K562 (cell line): ENCODE measurements at regions of chr13 and their contacts with region 1.

Region 1: DNA sequence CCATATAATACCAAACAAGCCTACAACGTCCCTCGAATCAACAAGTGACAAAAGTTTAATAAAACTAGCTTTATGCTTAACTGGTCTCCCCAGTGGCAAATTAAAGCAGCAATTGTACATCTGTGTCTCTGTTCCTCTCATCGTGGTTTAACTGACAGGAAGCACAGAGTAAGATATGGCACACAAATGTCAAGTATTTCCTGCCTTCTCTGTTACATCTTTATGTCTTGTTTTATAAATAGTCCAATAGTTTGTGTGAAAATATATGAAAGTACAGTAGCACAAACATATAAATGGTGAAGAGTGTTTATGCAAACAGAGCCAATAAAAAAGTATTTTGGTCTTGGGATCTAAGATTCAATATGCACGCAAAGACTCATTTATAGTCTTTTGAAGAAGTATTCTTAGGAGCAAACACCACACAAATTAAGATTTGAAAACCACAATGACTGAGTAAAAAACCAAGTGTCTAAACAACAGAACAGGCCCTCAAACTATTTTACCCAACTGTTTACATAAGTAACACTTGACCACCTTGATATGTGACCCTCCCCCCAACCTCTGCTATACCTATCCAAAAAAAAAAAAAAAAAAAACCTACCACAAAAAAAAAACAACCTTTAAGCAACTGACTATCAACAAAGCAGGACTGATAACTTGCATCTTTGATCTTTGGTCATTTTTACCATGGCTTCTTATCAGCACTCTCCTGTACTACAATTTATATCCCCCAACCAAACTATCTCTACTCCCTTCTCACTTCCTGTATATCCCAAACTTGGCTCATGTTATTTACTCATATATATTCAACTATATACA is 14.0 kb downstream of the ELF1 start:
- DNase-seq: peak in 2 of 4 experiments; percentile 26 to 63
- ATAC-seq: peak; percentile 68
- H3K4me3 ChIP-seq: no peak overlapping the region
- H3K27ac ChIP-seq: peak overlapping the region; percentile 71
- H3K4me1 ChIP-seq: peaks cover 4 to 45% of the 10 kb centered on the region in 2 experiments
- H3K27me3 ChIP-seq: no peaks in the 10 kb centered on the region
- CTCF ChIP-seq: no peak
- EP300 ChIP-seq: peak; percentile 89
- POLR2A ChIP-seq: no peak
- RAD21 ChIP-seq: no peak

Region 2: DNA sequence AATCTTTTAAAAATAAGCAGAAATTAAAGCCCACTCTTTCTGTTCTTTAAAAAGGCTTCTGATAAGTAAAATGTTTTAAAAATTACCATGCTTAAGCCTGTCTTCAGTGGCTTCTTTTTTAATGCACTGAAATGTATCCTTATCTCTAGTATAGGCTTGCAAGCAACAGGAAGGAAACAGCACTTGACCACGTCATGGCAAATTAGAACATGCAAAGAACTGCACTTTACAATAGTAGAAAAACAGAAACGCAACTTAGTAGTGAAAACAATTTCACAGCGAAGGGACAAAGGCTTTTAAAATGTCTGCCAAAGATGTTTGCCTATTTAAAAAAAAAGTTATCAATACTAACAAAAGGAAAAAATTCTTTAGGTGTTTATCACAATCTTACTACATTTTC is 22.3 kb before region 1 on chr13:
- CTCF ChIA-PET with region 1: no interaction called
- POLR2A ChIA-PET with region 1: no interaction called
- in situ Hi-C with region 1: no loop called
- intact Hi-C with region 1: loop called (anchors 1 kb)
- DNase-seq: peak in 2 of 4 experiments; percentile 53 to 74
- ATAC-seq: peak; percentile 66
- H3K4me3 ChIP-seq: no peak overlapping the region
- H3K27ac ChIP-seq: peak overlapping the region; percentile 82; the same call in 2 of the 3 replicates
- H3K4me1 ChIP-seq: peaks cover 0 to 24% of the 10 kb centered on the region in 2 experiments; a peak in 1 of 5 replicates
- H3K27me3 ChIP-seq: no peaks in the 10 kb centered on the region
- CTCF ChIP-seq: no peak
- EP300 ChIP-seq: peak; percentile 68; the same call in 1 of the 2 replicates
- POLR2A ChIP-seq: no peak
- RAD21 ChIP-seq: no peak

Region 3: DNA sequence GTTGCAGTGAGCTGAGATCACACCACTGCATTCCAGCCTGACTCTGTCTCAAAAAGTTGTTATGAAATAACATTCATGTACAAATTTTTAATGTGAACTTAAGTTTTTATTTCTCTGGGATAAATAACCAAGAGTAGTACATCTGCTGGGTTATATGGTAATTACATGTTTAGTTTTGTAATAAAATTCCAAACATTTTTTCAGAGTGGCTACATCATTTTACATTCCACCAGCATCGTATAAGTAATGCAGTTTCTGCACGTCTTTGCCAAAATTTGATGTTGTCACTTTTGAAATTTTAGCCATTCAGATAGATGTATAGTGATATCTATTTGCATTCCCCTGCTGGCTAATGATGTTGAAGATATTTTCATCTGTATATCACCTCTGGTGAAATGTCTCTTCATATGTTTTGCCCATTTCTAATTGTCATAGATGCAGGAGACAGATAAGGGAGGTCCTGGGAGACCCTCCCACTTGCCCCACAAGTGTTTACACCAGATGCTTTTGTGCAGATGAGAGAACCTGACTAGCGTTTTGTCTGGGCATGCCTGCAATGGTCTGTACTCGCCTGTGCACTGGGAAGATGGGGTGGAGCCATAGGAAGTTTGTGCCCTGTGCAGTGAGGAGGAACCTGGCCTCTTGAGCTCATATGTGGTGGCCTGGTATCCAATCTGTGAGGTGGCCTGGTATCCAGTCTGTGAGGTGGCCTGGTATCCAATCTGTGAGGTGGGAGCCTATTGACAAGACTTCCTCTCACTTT is 140.2 kb after region 1 on chr13:
- CTCF ChIA-PET with region 1: no interaction called
- POLR2A ChIA-PET with region 1: no interaction called
- in situ Hi-C with region 1: no loop called
- intact Hi-C with region 1: no loop called
- DNase-seq: no peak
- ATAC-seq: no peak
- H3K4me3 ChIP-seq: no peak overlapping the region
- H3K27ac ChIP-seq: no peak overlapping the region
- H3K4me1 ChIP-seq: no peaks in the 10 kb centered on the region
- H3K27me3 ChIP-seq: no peaks in the 10 kb centered on the region
- CTCF ChIP-seq: no peak
- EP300 ChIP-seq: no peak
- POLR2A ChIP-seq: no peak
- RAD21 ChIP-seq: no peak